ENCODE measurements at regions of chr16 and their contacts with region 1.

Region 1: GRCh38 chr16:71311553-71312158 is 22.5 kb upstream of the CMTR2 start:
- DNase-seq: peak; percentile 28
- H3K4me3 ChIP-seq: no peak overlapping the region
- H3K27ac ChIP-seq: no peak overlapping the region
- H3K4me1 ChIP-seq: no peaks in the 10 kb centered on the region
- H3K27me3 ChIP-seq: no peaks in the 10 kb centered on the region
- CTCF ChIP-seq: peak; percentile 63 to 71
- POLR2A ChIP-seq: no peak

Region 2: GRCh38 chr16:70679666-70680494 is 631.8 kb before region 1 on chr16:
- CTCF ChIA-PET with region 1: interaction called, 3 read pairs
- POLR2A ChIA-PET with region 1: no interaction called
- dilution Hi-C with region 1: no loop called
- intact Hi-C with region 1: loop called (anchors 5 kb)
- DNase-seq: no peak
- H3K4me3 ChIP-seq: no peak overlapping the region
- H3K27ac ChIP-seq: no peak overlapping the region
- H3K4me1 ChIP-seq: peaks cover 5% of the 10 kb centered on the region
- H3K27me3 ChIP-seq: no peaks in the 10 kb centered on the region
- CTCF ChIP-seq: peak; percentile 49 to 56
- POLR2A ChIP-seq: no peak

Region 3: GRCh38 chr16:71214746-71215381 is 96.8 kb before region 1 on chr16:
- CTCF ChIA-PET with region 1: interaction called, 86 read pairs
- POLR2A ChIA-PET with region 1: no interaction called
- dilution Hi-C with region 1: no loop called
- intact Hi-C with region 1: loop called (anchors 1 kb)
- DNase-seq: peak; percentile 25
- H3K4me3 ChIP-seq: no peak overlapping the region
- H3K27ac ChIP-seq: no peak overlapping the region
- H3K4me1 ChIP-seq: no peaks in the 10 kb centered on the region
- H3K27me3 ChIP-seq: no peaks in the 10 kb centered on the region
- CTCF ChIP-seq: no peak
- POLR2A ChIP-seq: no peak

Region 4: DNA sequence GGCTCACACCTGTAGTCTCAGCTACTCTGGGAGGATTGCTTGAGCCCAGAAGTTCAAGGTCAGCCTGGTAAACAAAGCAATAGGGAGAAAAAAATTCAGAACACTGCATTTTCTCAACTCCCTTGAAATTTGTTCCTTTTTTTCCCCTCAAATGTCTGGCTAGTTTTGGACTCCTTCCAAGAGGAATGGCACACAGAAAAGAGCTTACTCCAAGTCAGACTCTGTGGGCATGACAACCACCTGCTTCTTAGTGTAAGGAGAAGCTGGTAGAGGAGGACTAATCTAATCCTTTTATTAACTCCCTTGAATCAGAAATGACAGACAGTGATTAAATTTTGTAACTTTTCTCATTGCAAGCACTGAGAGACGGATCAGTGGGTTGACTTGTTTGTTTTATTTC is 53.3 kb before region 1 on chr16:
- CTCF ChIA-PET with region 1: interaction called, 11 read pairs
- POLR2A ChIA-PET with region 1: no interaction called
- dilution Hi-C with region 1: no loop called
- intact Hi-C with region 1: no loop called
- DNase-seq: no peak
- H3K4me3 ChIP-seq: no peak overlapping the region
- H3K27ac ChIP-seq: no peak overlapping the region
- H3K4me1 ChIP-seq: no peaks in the 10 kb centered on the region
- H3K27me3 ChIP-seq: peaks cover 3 to 9% of the 10 kb centered on the region in 2 experiments
- CTCF ChIP-seq: no peak
- POLR2A ChIP-seq: no peak

Region 5: DNA sequence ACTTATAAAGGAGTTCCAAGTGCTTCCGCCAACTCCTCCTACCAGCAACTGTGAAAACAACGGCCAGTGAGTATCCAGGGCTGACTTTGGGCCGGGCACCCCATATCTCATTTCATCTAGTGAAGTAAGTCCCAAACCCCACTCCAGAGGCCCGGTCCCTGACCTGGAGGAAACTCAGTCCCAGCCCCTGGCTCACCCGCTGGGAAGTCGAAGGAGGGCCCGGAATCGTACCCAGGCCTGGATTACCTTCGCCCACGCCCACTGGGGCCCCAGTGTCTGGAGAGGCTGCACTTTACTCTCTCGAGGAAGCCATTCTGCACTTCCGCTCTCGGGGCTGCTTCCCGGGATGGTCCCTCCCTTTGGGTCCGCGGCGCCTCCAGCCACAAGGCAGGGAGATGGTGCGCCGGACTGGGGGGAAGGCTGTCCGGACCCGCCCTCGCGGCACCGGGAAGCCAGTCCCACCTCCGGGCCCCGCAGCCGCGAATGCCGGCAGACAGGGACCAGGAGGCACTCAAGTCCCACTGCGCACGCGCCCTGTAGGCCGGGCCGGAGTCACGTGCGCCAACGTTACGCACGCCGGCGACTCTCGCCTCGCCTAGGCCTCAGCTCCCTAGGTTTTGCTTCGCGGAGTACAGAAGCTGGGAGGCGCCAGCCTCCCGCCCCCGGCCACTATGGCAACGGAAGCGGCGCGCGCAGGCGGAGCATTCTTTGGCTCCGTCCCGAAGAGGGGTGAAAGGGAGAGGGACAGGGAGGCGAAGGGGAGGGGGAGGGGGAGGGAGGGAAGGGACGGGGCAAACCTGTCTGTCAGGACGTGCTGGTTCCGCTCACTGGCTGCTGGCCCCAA is 22.5 kb before region 1 on chr16 and contains the start of gene CMTR2:
- CTCF ChIA-PET with region 1: interaction called, 24 read pairs
- POLR2A ChIA-PET with region 1: no interaction called
- dilution Hi-C with region 1: no loop called
- intact Hi-C with region 1: no loop called
- DNase-seq: peak; percentile 96
- H3K4me3 ChIP-seq: peak within 1 kb of the TSS; percentile 49 to 84 (median 59)
- H3K27ac ChIP-seq: peak within 1 kb of the TSS; percentile 79
- H3K4me1 ChIP-seq: peaks cover 18% of the 10 kb centered on the region
- H3K27me3 ChIP-seq: peaks cover 1 to 3% of the 10 kb centered on the region in 2 experiments
- CTCF ChIP-seq: no peak
- POLR2A ChIP-seq: peak; percentile 89
- total RNA-seq, gene CMTR2: 15.5 and 18.8 TPM in 2 replicates

Region 6: GRCh38 chr16:71328151-71328550 is 16.5 kb after region 1 on chr16:
- CTCF ChIA-PET with region 1: interaction called, 38 read pairs
- POLR2A ChIA-PET with region 1: no interaction called
- dilution Hi-C with region 1: no loop called
- intact Hi-C with region 1: no loop called
- DNase-seq: no peak
- H3K4me3 ChIP-seq: no peak overlapping the region
- H3K27ac ChIP-seq: no peak overlapping the region
- H3K4me1 ChIP-seq: no peaks in the 10 kb centered on the region
- H3K27me3 ChIP-seq: no peaks in the 10 kb centered on the region
- CTCF ChIP-seq: no peak
- POLR2A ChIP-seq: no peak

Region 7: GRCh38 chr16:71358464-71358998 is 46.9 kb after region 1 on chr16 and contains the start of gene CALB2:
- CTCF ChIA-PET with region 1: interaction called, 36 read pairs
- POLR2A ChIA-PET with region 1: no interaction called
- dilution Hi-C with region 1: no loop called
- intact Hi-C with region 1: no loop called
- DNase-seq: peak; percentile 47
- H3K4me3 ChIP-seq: no peak within 1 kb of the TSS
- H3K27ac ChIP-seq: no peak within 1 kb of the TSS
- H3K4me1 ChIP-seq: peaks cover 2% of the 10 kb centered on the region
- H3K27me3 ChIP-seq: no peaks in the 10 kb centered on the region
- CTCF ChIP-seq: peak; percentile 76 to 95
- POLR2A ChIP-seq: no peak
- total RNA-seq, gene CALB2: not detected in 2 replicates

Region 8: GRCh38 chr16:71645453-71645852 is 333.8 kb after region 1 on chr16:
- CTCF ChIA-PET with region 1: no interaction called
- POLR2A ChIA-PET with region 1: no interaction called
- dilution Hi-C with region 1: no loop called
- intact Hi-C with region 1: no loop called
- DNase-seq: no peak
- H3K4me3 ChIP-seq: no peak overlapping the region
- H3K27ac ChIP-seq: no peak overlapping the region
- H3K4me1 ChIP-seq: no peaks in the 10 kb centered on the region
- H3K27me3 ChIP-seq: no peaks in the 10 kb centered on the region
- CTCF ChIP-seq: peak; percentile 6 to 33
- POLR2A ChIP-seq: no peak

Measured in endothelial cell of umbilical vein (primary cell).